Head of caudate nucleus (tissue), 42 donors: ENCODE measurements at regions of chr2 and their contacts with region 1.

Region 1: GRCh38 chr2:241355983-241356870 is at the start of gene FARP2:
- DNase-seq: peak; percentile 97 to 100 (median 100)

Region 2: GRCh38 chr2:241289597-241289996 is 66.6 kb before region 1 on chr2:
- intact Hi-C with region 1: no loop called
- DNase-seq: no peak

Region 3: GRCh38 chr2:241315093-241315878 is 40.9 kb before region 1 on chr2 and contains the start of gene HDLBP:
- intact Hi-C with region 1: loop called (anchors 5 kb)
- DNase-seq: peak; percentile 93 to 99 (median 98)

Region 4: DNA sequence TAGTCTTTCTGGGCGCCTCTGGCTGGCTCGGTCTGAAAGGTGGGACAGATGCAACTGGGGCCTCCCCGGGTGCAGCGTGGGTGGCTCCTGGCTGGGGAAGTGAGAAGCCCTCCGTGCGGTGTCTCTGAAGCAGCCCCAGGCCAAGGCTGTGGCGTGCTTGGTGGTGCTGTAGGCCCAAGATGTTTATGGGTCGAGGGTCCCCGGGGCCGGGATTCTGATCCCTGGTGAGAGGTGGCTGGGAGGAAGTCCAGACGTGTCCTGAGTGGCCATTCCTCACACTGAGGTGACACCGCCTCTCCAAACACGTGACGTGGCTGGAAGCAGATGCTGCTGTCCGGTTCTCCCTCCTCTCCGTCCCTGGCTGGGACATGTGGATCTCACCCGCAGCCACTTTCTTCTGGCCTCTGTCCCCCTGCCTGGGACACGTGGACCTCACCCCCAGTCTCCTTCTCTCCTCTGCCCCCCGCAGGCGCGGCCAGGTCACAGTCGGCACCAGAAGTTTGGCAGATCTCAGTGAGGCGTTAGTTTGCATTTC is 525.9 kb after region 1 on chr2:
- intact Hi-C with region 1: no loop called
- DNase-seq: peak in 4 of 42 donors; percentile 29 to 49 (median 42)